ENCODE measurements at regions of chr3 and their contacts with region 1.

Region 1: GRCh38 chr3:47824541-47825473 is 21.9 kb downstream of the DHX30 start:
- DNase-seq: peak; percentile 73 to 85 (median 82)
- H3K4me3 ChIP-seq: peak overlapping the region; percentile 91 to 93
- H3K4me3 Mint-ChIP-seq: peak overlapping the region; percentile 88 to 91 (median 90)
- H3K27ac ChIP-seq: peak overlapping the region; percentile 85
- H3K27ac Mint-ChIP-seq: peak overlapping the region; percentile 83 to 95 (median 92)
- H3K4me1 ChIP-seq: peaks cover 28% of the 10 kb centered on the region
- H3K4me1 Mint-ChIP-seq: peaks cover 13 to 43% (median 34%) of the 10 kb centered on the region in 4 donors
- H3K27me3 ChIP-seq: no peaks in the 10 kb centered on the region
- H3K27me3 Mint-ChIP-seq: no peaks in the 10 kb centered on the region

Region 2: DNA sequence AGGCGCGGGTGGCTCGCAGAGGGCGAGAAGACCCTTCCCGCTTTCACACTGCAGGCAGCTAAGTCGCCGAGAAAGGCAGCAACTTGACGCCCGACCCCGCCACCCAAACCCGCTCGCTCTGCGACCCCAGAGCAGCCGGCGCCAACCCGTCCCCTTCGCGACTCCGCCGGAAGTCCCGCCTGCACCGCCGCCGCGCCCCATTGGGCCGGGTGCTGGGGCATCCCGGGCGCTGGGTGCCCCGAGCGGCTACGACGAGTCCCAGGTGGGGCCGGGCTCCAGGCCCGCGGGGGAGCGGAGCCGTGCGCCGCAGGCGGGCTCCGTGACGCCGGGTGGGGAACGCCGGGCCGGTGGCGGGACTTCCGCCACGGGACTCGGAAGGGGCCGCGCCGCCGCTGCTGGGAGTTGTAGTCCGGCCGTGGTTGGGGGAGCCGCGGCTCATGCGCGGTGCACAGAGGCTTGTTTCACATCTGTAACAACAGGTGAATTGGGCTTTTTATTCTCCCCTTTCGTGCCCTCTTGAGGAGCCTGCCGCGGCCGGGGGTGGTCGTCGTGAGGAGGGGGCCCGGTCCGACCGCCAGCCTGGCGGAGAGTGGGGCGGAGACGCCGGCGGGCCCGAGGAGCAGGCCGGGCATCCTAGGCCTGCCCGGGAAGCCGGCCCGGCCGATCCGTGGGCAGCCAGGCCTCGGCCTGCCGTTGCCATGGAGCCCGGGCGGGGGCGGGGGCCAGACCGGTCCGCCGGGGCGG is 21.9 kb before region 1 on chr3 and contains the start of gene DHX30:
- CTCF ChIA-PET with region 1: interaction called, 15 read pairs
- POLR2A ChIA-PET with region 1: interaction called, 8 read pairs
- intact Hi-C with region 1: loop called (anchors 1 kb)
- DNase-seq: peak; percentile 81 to 90 (median 84)
- H3K4me3 ChIP-seq: peak within 1 kb of the TSS; percentile 95 to 97
- H3K4me3 Mint-ChIP-seq: peak within 1 kb of the TSS; percentile 93 to 97 (median 95)
- H3K27ac ChIP-seq: peak within 1 kb of the TSS; percentile 90
- H3K27ac Mint-ChIP-seq: peak within 1 kb of the TSS; percentile 91 to 98 (median 97)
- H3K4me1 ChIP-seq: peaks cover 27% of the 10 kb centered on the region
- H3K4me1 Mint-ChIP-seq: peaks cover 15 to 27% (median 22%) of the 10 kb centered on the region in 4 donors
- H3K27me3 ChIP-seq: no peaks in the 10 kb centered on the region
- H3K27me3 Mint-ChIP-seq: no peaks in the 10 kb centered on the region
- total RNA-seq, gene DHX30: 86.5 to 93.0 TPM

Region 3: GRCh38 chr3:47836986-47837385 is 12.2 kb after region 1 on chr3:
- CTCF ChIA-PET with region 1: interaction called, 32 read pairs
- POLR2A ChIA-PET with region 1: interaction called, 4 read pairs
- intact Hi-C with region 1: no loop called
- DNase-seq: no peak
- H3K4me3 ChIP-seq: no peak overlapping the region
- H3K4me3 Mint-ChIP-seq: no peak overlapping the region
- H3K27ac ChIP-seq: no peak overlapping the region
- H3K27ac Mint-ChIP-seq: peak overlapping the region in 4 of 7 donors; percentile 2 to 52 (median 28)
- H3K4me1 ChIP-seq: no peaks in the 10 kb centered on the region
- H3K4me1 Mint-ChIP-seq: peaks cover 0 to 16% (median 5%) of the 10 kb centered on the region in 4 donors
- H3K27me3 ChIP-seq: no peaks in the 10 kb centered on the region
- H3K27me3 Mint-ChIP-seq: no peaks in the 10 kb centered on the region

Region 4: GRCh38 chr3:47868306-47868705 is 43.5 kb after region 1 on chr3:
- CTCF ChIA-PET with region 1: no interaction called
- POLR2A ChIA-PET with region 1: no interaction called
- intact Hi-C with region 1: no loop called
- DNase-seq: no peak
- H3K4me3 ChIP-seq: no peak overlapping the region
- H3K4me3 Mint-ChIP-seq: no peak overlapping the region
- H3K27ac ChIP-seq: no peak overlapping the region
- H3K27ac Mint-ChIP-seq: no peak overlapping the region
- H3K4me1 ChIP-seq: no peaks in the 10 kb centered on the region
- H3K4me1 Mint-ChIP-seq: no peaks in the 10 kb centered on the region
- H3K27me3 ChIP-seq: no peaks in the 10 kb centered on the region
- H3K27me3 Mint-ChIP-seq: no peaks in the 10 kb centered on the region

Region 5: GRCh38 chr3:47912006-47912504 is 87.2 kb after region 1 on chr3:
- CTCF ChIA-PET with region 1: no interaction called
- POLR2A ChIA-PET with region 1: no interaction called
- intact Hi-C with region 1: no loop called
- DNase-seq: no peak
- H3K4me3 ChIP-seq: no peak overlapping the region
- H3K4me3 Mint-ChIP-seq: no peak overlapping the region
- H3K27ac ChIP-seq: no peak overlapping the region
- H3K27ac Mint-ChIP-seq: peak overlapping the region in 2 of 7 donors; percentile 5 to 62
- H3K4me1 ChIP-seq: no peaks in the 10 kb centered on the region
- H3K4me1 Mint-ChIP-seq: peaks cover 0 to 2% (median 0%) of the 10 kb centered on the region in 4 donors
- H3K27me3 ChIP-seq: no peaks in the 10 kb centered on the region
- H3K27me3 Mint-ChIP-seq: no peaks in the 10 kb centered on the region

Region 6: DNA sequence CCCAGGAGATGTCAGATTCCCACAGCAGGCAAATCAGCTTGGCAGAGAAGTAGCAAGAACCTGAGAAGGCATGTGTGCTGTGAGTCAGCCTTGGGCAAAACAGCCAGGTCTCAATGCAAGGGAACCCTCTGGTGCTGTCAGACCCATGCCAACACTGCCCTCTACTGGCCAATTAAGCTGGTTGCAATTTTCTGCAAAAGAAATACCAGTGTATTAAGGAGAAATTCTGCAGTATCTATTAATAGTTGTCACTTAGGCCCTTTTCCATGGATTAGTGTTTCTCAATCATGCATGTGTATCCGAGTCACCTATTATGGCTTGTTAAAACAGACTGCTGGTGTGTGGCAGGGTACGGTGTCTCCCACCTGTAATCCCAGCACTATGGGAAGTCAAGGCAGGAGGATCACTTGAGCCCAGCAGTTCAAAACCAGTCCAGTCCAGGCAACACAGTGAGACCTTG is 165.2 kb after region 1 on chr3:
- CTCF ChIA-PET with region 1: interaction called, 43 read pairs
- POLR2A ChIA-PET with region 1: interaction called, 4 read pairs
- intact Hi-C with region 1: loop called (anchors 1 kb)
- DNase-seq: peak; percentile 69 to 75 (median 73)
- H3K4me3 ChIP-seq: no peak overlapping the region
- H3K4me3 Mint-ChIP-seq: no peak overlapping the region
- H3K27ac ChIP-seq: no peak overlapping the region
- H3K27ac Mint-ChIP-seq: peak overlapping the region in 1 of 7 donors; percentile 87
- H3K4me1 ChIP-seq: no peaks in the 10 kb centered on the region
- H3K4me1 Mint-ChIP-seq: peaks cover 2 to 7% (median 5%) of the 10 kb centered on the region in 4 donors
- H3K27me3 ChIP-seq: no peaks in the 10 kb centered on the region
- H3K27me3 Mint-ChIP-seq: no peaks in the 10 kb centered on the region